HCT116 (cell line): ENCODE measurements at regions of chr6 and their contacts with region 1.

Region 1: DNA sequence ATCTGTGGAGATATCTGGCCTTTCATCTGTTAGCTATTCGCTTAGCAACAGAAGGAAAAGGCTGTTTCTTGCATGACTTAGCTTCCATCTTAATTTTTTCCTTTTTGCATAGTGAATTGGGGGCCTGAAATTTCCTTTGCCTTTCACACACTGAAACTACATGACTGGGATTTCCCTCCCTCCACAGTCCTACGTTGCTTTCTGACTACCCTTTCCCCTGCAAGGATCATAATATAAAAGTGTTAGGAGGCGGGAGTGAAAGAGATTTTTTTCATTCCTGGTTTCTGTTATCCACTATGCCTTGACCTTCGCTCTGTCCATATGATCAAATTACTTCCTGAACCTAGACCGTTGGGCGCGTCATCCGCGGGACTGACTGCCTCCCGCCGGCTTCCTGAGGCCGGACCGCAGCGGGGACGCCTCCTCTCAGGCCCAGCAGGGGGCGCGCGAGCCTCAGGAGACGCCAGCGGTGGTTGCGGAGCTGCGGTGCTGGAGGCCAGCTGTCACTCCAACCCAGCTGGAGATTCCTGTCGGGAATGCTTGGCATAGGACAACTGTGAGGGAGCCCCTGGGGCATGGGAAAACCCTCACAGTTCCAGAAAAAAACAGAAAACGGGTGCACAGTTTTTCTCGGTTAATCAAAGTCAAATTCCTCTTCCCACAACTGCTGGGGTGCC is 55.6 kb downstream of the MEP1A start:
- DNase-seq: peak; percentile 53
- ATAC-seq: peak; percentile 99
- H3K4me3 ChIP-seq: peak overlapping the region in 1 of 2 experiments; percentile 13; a peak in 1 of 4 replicates
- H3K27ac ChIP-seq: no peak overlapping the region
- H3K4me1 ChIP-seq: peaks cover 0 to 18% of the 10 kb centered on the region in 2 experiments; a peak in 2 of 4 replicates
- H3K27me3 ChIP-seq: no peaks in the 10 kb centered on the region
- CTCF ChIP-seq: peak; percentile 88 to 94 (median 92)
- POLR2A ChIP-seq: no peak
- RAD21 ChIP-seq: peak; percentile 98

Region 2: GRCh38 chr6:46338131-46338530 is 510.7 kb before region 1 on chr6:
- CTCF ChIA-PET with region 1: no interaction called
- POLR2A ChIA-PET with region 1: no interaction called
- RAD21 ChIA-PET with region 1: no interaction called
- intact Hi-C with region 1: no loop called
- DNase-seq: no peak
- ATAC-seq: no peak
- H3K4me3 ChIP-seq: no peak overlapping the region
- H3K27ac ChIP-seq: no peak overlapping the region
- H3K4me1 ChIP-seq: no peaks in the 10 kb centered on the region
- H3K27me3 ChIP-seq: no peaks in the 10 kb centered on the region
- CTCF ChIP-seq: no peak
- POLR2A ChIP-seq: no peak
- RAD21 ChIP-seq: no peak

Region 3: GRCh38 chr6:46419576-46420002 is 429.2 kb before region 1 on chr6:
- CTCF ChIA-PET with region 1: interaction called, 4 read pairs
- POLR2A ChIA-PET with region 1: no interaction called
- RAD21 ChIA-PET with region 1: no interaction called
- intact Hi-C with region 1: loop called (anchors 5 kb)
- DNase-seq: peak; percentile 60
- ATAC-seq: peak; percentile 63; the same call in 1 of the 2 replicates
- H3K4me3 ChIP-seq: no peak overlapping the region
- H3K27ac ChIP-seq: no peak overlapping the region
- H3K4me1 ChIP-seq: no peaks in the 10 kb centered on the region
- H3K27me3 ChIP-seq: no peaks in the 10 kb centered on the region
- CTCF ChIP-seq: peak; percentile 67 to 88 (median 73)
- POLR2A ChIP-seq: no peak
- RAD21 ChIP-seq: peak; percentile 91

Region 4: GRCh38 chr6:46704562-46704961 is 144.3 kb before region 1 on chr6:
- CTCF ChIA-PET with region 1: no interaction called
- POLR2A ChIA-PET with region 1: no interaction called
- RAD21 ChIA-PET with region 1: no interaction called
- intact Hi-C with region 1: loop called (anchors 5 kb)
- DNase-seq: peak; percentile 44
- ATAC-seq: peak; percentile 77
- H3K4me3 ChIP-seq: no peak overlapping the region
- H3K27ac ChIP-seq: no peak overlapping the region
- H3K4me1 ChIP-seq: 0 out of 4 replicates have a peak, but pooled peaks cover 0 to 4% of the 10 kb centered on the region in 2 experiments
- H3K27me3 ChIP-seq: no peaks in the 10 kb centered on the region
- CTCF ChIP-seq: peak in 2 of 3 experiments; percentile 38 to 61; a peak in 3 of 6 replicates
- POLR2A ChIP-seq: no peak
- RAD21 ChIP-seq: peak; percentile 75

Region 5: DNA sequence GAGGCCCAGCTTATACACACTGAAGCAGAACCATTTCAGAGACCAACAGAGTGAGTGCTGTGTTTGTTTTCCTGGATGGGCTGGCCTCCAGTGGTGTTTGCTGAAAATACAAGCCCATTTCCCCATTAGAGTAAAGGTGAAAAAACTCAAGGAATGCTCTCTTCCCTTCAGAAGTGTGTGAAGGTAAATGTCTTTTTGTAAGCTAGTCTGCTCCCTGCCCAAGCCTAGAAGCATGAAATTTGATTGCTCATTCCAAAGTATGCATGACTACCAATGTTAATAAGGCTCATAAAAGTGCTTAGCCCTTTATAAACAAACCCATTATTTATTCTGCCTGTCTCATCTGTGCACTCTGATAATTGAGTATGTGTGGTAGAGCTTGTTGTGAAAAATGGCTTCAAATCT is 134.2 kb after region 1 on chr6:
- CTCF ChIA-PET with region 1: interaction called, 37 read pairs
- POLR2A ChIA-PET with region 1: no interaction called
- RAD21 ChIA-PET with region 1: interaction called in 1 of 2 experiments, 3 read pairs
- intact Hi-C with region 1: no loop called
- DNase-seq: no peak
- ATAC-seq: peak; percentile 63
- H3K4me3 ChIP-seq: no peak overlapping the region
- H3K27ac ChIP-seq: no peak overlapping the region
- H3K4me1 ChIP-seq: peaks cover 6 to 14% of the 10 kb centered on the region in 2 experiments; a peak in 3 of 4 replicates
- H3K27me3 ChIP-seq: no peaks in the 10 kb centered on the region
- CTCF ChIP-seq: peak in 2 of 3 experiments; percentile 5 to 17; a peak in 1 of 6 replicates
- POLR2A ChIP-seq: no peak
- RAD21 ChIP-seq: peak; percentile 29; the same call in 1 of the 2 replicates

Region 6: DNA sequence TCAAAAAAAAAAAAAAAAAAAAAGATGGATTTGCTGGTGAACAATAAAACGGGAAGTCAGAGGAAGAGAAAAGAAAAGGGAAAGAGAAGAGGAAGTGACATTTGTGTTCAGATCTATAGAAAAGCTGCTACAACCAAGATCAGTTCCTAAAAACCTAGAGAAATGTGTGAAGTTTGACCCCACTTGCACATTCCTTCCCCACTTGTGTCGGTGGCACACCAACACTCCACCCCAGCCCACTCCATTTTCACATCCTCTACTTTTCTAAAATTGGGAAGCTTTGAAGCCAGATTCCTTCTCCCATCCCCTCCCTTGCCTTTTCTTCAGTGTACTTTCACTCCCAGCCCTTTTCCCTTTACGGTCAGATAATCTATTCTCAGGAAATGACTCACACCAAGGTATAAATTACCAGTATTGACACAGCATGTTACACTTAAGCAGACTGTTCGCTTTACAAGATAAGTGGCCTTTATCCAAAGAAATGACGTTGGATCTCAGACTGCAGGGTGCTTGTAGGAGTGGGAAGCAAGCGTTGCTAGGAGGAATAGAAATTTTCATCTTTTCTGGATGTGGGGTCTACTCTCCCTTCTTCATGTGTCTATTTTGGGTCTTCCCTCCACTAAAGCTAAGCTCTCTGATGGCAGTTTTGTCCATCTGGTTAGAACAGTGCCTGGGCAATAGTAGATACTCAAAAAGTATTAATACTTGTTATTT is 285.8 kb after region 1 on chr6:
- CTCF ChIA-PET with region 1: no interaction called
- POLR2A ChIA-PET with region 1: no interaction called
- RAD21 ChIA-PET with region 1: no interaction called
- intact Hi-C with region 1: no loop called
- DNase-seq: peak; percentile 88
- ATAC-seq: peak; percentile 82
- H3K4me3 ChIP-seq: peak overlapping the region in 1 of 2 experiments; percentile 30; a peak in 2 of 4 replicates
- H3K27ac ChIP-seq: peak overlapping the region; percentile 48
- H3K4me1 ChIP-seq: peaks cover 44 to 49% of the 10 kb centered on the region in 2 experiments
- H3K27me3 ChIP-seq: no peaks in the 10 kb centered on the region
- CTCF ChIP-seq: no peak
- POLR2A ChIP-seq: no peak
- RAD21 ChIP-seq: no peak; the same call in 1 of the 2 replicates

Region 7: GRCh38 chr6:47161176-47161687 is 312.4 kb after region 1 on chr6:
- CTCF ChIA-PET with region 1: no interaction called
- POLR2A ChIA-PET with region 1: no interaction called
- RAD21 ChIA-PET with region 1: no interaction called
- intact Hi-C with region 1: no loop called
- DNase-seq: peak; percentile 29
- ATAC-seq: peak; percentile 59
- H3K4me3 ChIP-seq: no peak overlapping the region
- H3K27ac ChIP-seq: no peak overlapping the region
- H3K4me1 ChIP-seq: peaks cover 0 to 12% of the 10 kb centered on the region in 2 experiments; a peak in 2 of 4 replicates
- H3K27me3 ChIP-seq: no peaks in the 10 kb centered on the region
- CTCF ChIP-seq: no peak
- POLR2A ChIP-seq: no peak
- RAD21 ChIP-seq: 0 out of 2 replicates have a peak, but pooled peaks have one; percentile 7

Region 8: DNA sequence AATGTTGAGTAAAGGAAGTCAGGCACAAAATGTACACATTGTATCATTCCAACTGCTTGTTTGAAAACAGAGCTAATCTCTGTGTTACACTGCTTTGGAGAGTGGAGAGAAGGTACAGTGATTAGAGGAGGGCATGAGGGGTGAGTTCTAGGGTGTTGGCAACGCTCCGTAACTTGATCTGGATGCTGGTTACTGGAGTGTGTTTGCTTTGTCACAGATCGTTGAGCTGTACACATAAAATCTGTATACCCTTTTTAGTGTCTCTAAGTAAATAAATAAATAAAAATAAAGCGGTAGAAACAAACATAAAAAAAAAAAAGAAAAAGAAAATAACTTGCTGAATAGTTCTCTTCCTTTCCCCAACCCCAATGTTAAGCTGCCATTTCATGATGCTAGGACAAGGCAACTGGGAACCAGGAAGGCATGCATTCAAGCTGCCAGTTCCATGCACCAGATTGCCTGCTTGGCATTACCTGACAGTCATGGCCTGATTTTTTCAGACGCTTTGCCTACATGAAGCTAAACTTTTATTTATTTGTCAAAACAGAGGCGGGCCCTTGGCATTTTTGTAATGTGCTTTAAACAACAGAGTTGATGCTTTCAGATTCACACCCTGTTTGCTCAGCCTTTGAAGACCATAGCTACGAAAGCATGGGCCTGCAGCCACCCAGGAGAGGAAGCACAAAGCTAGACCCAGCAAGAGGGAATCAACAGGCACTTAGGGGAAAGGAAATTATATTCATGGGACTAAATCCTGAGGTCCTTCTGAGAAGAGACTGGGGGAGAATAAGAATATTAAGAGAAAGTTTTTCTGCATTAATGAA is 439.7 kb after region 1 on chr6:
- CTCF ChIA-PET with region 1: no interaction called
- POLR2A ChIA-PET with region 1: no interaction called
- RAD21 ChIA-PET with region 1: no interaction called
- intact Hi-C with region 1: no loop called
- DNase-seq: no peak
- ATAC-seq: no peak
- H3K4me3 ChIP-seq: no peak overlapping the region
- H3K27ac ChIP-seq: no peak overlapping the region
- H3K4me1 ChIP-seq: peaks cover 0 to 8% of the 10 kb centered on the region in 2 experiments; a peak in 1 of 4 replicates
- H3K27me3 ChIP-seq: no peaks in the 10 kb centered on the region
- CTCF ChIP-seq: no peak
- POLR2A ChIP-seq: no peak
- RAD21 ChIP-seq: no peak

Region 9: GRCh38 chr6:47309291-47310130 is 460.7 kb after region 1 on chr6 and contains the start of gene TNFRSF21:
- CTCF ChIA-PET with region 1: no interaction called
- POLR2A ChIA-PET with region 1: no interaction called
- RAD21 ChIA-PET with region 1: no interaction called
- intact Hi-C with region 1: loop called (anchors 2 kb)
- DNase-seq: peak; percentile 89
- ATAC-seq: peak; percentile 94
- H3K4me3 ChIP-seq: peak within 1 kb of the TSS; percentile 73 to 80
- H3K27ac ChIP-seq: peak within 1 kb of the TSS; percentile 70
- H3K4me1 ChIP-seq: peaks cover 6 to 13% of the 10 kb centered on the region in 2 experiments
- H3K27me3 ChIP-seq: no peaks in the 10 kb centered on the region
- CTCF ChIP-seq: peak; percentile 85 to 88 (median 87)
- POLR2A ChIP-seq: peak; percentile 72
- RAD21 ChIP-seq: peak; percentile 97
- total RNA-seq, gene TNFRSF21: 48.3 TPM